Mammary epithelial cell (primary cell): ENCODE measurements at regions of chr1 and their contacts with region 1.

Region 1: GRCh38 chr1:224127925-224128819 is 14.3 kb downstream of the FBXO28 start:
- DNase-seq: peak; percentile 39
- H3K4me3 ChIP-seq: no peak overlapping the region
- H3K27ac ChIP-seq: peak overlapping the region; percentile 4
- H3K4me1 ChIP-seq: peaks cover 13% of the 10 kb centered on the region
- H3K27me3 ChIP-seq: no peaks in the 10 kb centered on the region
- CTCF ChIP-seq: no peak

Region 2: DNA sequence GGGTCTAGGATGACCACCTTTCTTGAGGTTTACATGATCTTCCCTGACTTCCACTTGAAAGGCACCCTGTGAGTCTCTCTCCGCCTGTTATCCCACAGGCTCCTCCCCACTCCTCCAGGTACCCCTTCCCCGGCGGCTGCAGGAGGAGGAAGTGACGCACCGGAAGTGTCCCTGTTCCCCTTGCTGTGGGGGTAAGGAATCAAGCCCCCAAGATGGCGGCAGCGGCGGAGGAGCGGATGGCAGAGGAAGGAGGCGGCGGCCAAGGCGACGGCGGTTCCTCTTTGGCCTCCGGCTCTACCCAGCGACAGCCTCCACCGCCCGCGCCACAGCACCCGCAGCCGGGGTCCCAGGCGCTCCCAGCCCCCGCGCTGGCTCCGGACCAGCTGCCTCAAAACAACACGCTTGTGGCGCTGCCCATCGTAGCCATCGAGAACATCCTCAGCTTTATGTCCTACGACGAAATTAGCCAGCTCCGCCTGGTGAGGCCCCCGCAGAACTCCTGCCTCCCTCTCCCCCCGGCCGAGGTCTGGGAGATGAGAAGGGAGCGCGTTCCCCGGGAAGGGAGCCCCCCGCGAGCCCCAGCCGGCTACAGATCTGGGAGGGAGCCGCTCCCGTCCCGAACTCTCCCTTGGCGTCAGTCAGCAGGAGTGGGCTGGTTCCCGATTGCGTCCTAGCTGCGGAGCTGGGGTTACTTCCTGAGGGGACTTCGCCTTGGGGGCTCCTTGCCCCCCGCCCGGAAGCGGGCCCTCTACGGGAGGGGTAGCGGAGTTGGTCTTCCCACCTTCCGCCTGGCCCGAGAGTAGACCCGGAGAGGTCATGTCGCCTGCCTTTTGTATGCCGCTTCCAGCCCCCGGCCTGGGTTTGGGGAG is 14.0 kb before region 1 on chr1 and contains the start of gene FBXO28:
- CTCF ChIA-PET with region 1: interaction called, 9 read pairs
- dilution Hi-C with region 1: no loop called
- in situ Hi-C with region 1: no loop called
- intact Hi-C with region 1: loop called (anchors 2 kb)
- DNase-seq: peak; percentile 88
- H3K4me3 ChIP-seq: peak within 1 kb of the TSS; percentile 58 to 85 (median 75)
- H3K27ac ChIP-seq: peak within 1 kb of the TSS; percentile 72
- H3K4me1 ChIP-seq: peaks cover 16% of the 10 kb centered on the region
- H3K27me3 ChIP-seq: no peaks in the 10 kb centered on the region
- CTCF ChIP-seq: no peak
- total RNA-seq, gene FBXO28: 41.0 to 49.4 TPM

Region 3: GRCh38 chr1:224149713-224150112 is 21.5 kb after region 1 on chr1:
- CTCF ChIA-PET with region 1: interaction called, 12 read pairs
- dilution Hi-C with region 1: no loop called
- in situ Hi-C with region 1: no loop called
- intact Hi-C with region 1: no loop called
- DNase-seq: no peak
- H3K4me3 ChIP-seq: no peak overlapping the region
- H3K27ac ChIP-seq: no peak overlapping the region
- H3K4me1 ChIP-seq: peaks cover 4% of the 10 kb centered on the region
- H3K27me3 ChIP-seq: no peaks in the 10 kb centered on the region
- CTCF ChIP-seq: no peak

Region 4: DNA sequence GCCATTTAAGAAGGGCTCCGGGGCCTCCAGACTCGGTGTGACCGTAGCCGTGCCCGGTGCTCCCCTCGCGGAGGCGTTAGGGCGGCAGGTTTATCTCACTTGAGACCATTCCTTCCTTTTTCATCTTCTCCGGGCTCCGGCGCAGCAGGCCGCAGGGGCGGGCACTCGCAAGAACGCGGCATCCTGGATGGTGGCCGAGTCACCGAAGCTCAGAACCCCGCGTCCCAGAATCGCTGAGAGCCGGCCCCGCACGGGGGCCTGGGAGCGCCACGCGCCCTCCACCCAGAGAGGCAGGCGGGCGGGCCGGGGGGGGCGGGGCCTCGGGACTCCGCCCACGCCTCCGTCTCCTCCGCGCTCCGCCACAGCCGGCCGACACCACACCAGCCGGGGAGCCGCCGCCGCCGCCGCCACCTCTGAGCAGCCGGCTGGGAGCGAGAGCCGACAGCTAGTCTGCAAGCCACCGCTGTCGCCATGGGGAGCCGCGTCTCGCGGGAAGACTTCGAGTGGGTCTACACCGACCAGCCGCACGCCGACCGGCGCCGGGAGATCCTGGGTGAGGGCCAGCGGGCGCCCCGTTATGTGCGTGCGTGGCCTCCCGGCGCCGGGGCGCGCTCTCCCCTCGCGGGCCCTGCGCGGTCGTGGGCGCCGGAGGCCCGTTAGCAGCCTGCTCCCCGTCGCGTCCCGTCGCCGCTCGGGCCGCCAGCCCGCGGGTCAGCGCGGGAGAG is 54.9 kb after region 1 on chr1 and contains the start of gene DEGS1:
- CTCF ChIA-PET with region 1: no interaction called
- dilution Hi-C with region 1: no loop called
- in situ Hi-C with region 1: no loop called
- intact Hi-C with region 1: loop called (anchors 5 kb)
- DNase-seq: peak; percentile 79
- H3K4me3 ChIP-seq: peak within 1 kb of the TSS; percentile 88 to 94 (median 94)
- H3K27ac ChIP-seq: peak within 1 kb of the TSS; percentile 65
- H3K4me1 ChIP-seq: peaks cover 10% of the 10 kb centered on the region
- H3K27me3 ChIP-seq: no peaks in the 10 kb centered on the region
- CTCF ChIP-seq: no peak
- total RNA-seq, gene DEGS1: 58.1 to 71.8 TPM